ENCODE measurements at regions of chr2 and their contacts with region 1.

Region 1: DNA sequence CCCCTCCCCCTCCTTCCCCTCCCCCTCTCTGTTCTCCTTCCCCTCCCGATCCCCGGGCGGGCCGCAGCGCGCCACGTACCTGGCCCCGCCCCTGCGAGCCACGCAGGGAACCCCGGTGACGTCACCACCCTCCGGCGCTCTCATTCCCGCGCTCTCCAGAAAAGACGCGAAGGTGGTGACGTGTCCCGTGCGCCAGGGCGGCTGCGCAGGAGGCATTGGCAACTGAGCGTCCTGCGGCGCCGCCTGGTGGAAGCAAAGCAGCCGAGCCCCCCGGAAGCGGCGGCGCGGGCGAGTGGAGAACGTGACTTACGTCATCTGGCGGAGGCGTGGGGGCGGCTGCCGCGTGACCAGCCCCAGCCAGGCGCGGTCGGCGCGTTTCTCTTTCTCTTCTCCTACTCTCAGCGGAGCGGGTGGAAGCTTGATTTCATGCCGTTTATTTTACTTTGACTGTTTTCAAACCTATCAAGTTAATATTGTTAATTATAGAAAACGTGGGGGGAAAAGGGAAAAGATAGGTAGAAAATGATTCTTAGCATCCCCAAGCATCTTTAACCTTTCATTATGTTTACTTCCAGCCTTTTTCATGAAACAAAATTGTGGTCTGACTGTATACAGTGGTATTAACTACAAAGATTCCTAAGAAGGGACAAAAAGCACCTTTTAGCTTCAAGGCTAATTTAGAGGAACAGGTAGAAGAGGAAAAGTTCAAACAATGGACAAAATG is 48.1 kb downstream of the C2orf42 start:
- DNase-seq: peak; percentile 99
- H3K4me3 ChIP-seq: peak overlapping the region; percentile 71 to 77
- H3K27ac ChIP-seq: peak overlapping the region; percentile 99
- H3K4me1 ChIP-seq: peaks cover 21% of the 10 kb centered on the region
- H3K27me3 ChIP-seq: no peaks in the 10 kb centered on the region
- CTCF ChIP-seq: peak; percentile 93 to 100 (median 99)
- POLR2A ChIP-seq: peak in 1 of 2 donors; percentile 92

Region 2: DNA sequence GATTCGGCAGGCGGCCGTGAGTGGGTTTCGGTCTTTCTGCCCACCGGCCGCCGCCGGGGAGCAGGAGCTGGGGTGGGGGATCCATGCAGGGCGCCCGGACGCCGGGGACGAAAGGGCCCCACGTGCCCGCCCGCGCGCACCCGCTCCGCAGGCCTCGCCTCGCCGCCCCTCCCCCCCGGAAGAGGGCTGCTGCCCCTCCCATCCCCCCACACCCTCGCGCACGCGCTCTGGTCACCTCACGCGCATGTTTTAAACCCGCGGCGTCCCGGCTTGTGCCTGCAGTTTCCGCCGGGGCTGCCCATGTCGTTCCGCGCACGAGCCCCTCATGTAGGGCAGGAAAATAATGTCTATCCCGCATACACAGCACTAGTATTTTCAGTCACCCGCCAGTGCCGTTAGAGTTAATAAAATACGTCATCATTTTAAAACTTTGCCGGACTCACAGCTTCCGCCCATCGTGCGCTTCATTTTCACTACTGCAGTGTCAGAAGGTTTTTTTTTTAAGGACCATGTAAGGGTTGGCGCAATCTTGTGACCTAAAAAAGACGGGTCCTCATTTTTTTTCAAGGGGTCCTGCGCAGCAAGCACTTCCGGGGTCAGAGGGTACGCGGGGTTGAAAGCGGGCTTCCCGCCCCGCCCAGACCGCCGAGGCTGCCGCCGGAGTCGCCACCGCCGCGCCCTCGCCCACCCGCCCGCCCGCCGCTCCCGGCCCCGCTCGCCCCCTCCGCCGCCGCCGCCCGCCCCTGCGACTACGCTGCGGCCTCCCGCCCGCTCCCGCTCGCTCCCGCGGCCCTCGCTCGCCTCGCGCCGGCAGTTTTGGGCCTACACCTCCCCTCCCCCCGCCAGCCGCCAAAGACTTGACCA is 55.7 kb before region 1 on chr2 and contains the start of gene PCBP1:
- intact Hi-C with region 1: loop called (anchors 1 kb)
- DNase-seq: peak in 1 of 2 donors; percentile 97
- H3K4me3 ChIP-seq: peak within 1 kb of the TSS; percentile 91 to 97
- H3K27ac ChIP-seq: peak within 1 kb of the TSS; percentile 100
- H3K4me1 ChIP-seq: peaks cover 57% of the 10 kb centered on the region
- H3K27me3 ChIP-seq: no peaks in the 10 kb centered on the region
- CTCF ChIP-seq: no peak
- POLR2A ChIP-seq: peak in 1 of 2 donors; percentile 94
- total RNA-seq, gene PCBP1: 210 TPM

Region 3: GRCh38 chr2:70984576-70985282 is 842.0 kb after region 1 on chr2:
- intact Hi-C with region 1: no loop called
- DNase-seq: peak in 1 of 2 donors; percentile 89
- H3K4me3 ChIP-seq: no peak overlapping the region
- H3K27ac ChIP-seq: no peak overlapping the region
- H3K4me1 ChIP-seq: no peaks in the 10 kb centered on the region
- H3K27me3 ChIP-seq: no peaks in the 10 kb centered on the region
- CTCF ChIP-seq: peak; percentile 30 to 35 (median 33)
- POLR2A ChIP-seq: no peak